ENCODE measurements at regions of chr1 and their contacts with region 1.

Region 1: GRCh38 chr1:248045209-248045608 is 1.4 kb upstream of the OR2L3 start:
- DNase-seq: no peak
- H3K4me3 ChIP-seq: no peak overlapping the region
- H3K27ac ChIP-seq: no peak overlapping the region
- H3K4me1 ChIP-seq: no peaks in the 10 kb centered on the region
- H3K27me3 ChIP-seq: no peaks in the 10 kb centered on the region
- CTCF ChIP-seq: no peak

Region 2: GRCh38 chr1:248114890-248115289 is 69.7 kb after region 1 on chr1:
- CTCF ChIA-PET with region 1: no interaction called
- dilution Hi-C with region 1: no loop called
- in situ Hi-C with region 1: no loop called
- intact Hi-C with region 1: no loop called
- DNase-seq: no peak
- H3K4me3 ChIP-seq: no peak overlapping the region
- H3K27ac ChIP-seq: no peak overlapping the region
- H3K4me1 ChIP-seq: no peaks in the 10 kb centered on the region
- H3K27me3 ChIP-seq: no peaks in the 10 kb centered on the region
- CTCF ChIP-seq: no peak

Region 3: DNA sequence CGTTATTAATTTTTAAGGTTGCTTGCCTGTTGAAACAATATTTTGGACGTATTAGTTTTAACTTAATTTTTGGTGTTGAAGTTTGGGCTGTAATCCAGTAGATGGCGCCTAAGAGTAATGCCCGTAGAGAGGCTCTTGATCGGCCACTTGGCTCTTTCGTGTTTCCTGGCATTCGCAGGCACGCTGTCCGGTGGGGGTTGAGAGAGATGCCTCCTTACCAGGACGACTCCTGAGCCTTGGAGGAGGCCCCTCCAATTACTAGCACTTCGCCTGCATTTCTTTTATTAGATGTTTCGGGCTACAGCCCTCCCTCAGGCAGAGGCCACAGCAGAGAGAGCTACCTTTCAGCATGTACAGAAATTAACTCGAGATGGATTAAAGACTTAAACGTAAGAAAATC is 198.0 kb after region 1 on chr1:
- CTCF ChIA-PET with region 1: no interaction called
- dilution Hi-C with region 1: no loop called
- in situ Hi-C with region 1: no loop called
- intact Hi-C with region 1: loop called (anchors 5 kb)
- DNase-seq: peak; percentile 27
- H3K4me3 ChIP-seq: no peak overlapping the region
- H3K27ac ChIP-seq: no peak overlapping the region
- H3K4me1 ChIP-seq: no peaks in the 10 kb centered on the region
- H3K27me3 ChIP-seq: no peaks in the 10 kb centered on the region
- CTCF ChIP-seq: peak; percentile 75 to 83